ENCODE measurements at regions of chrX and their contacts with region 1.

Region 1: GRCh38 chrX:43836435-43837184 is 45.6 kb downstream of the MAOB start:
- DNase-seq: no peak
- ATAC-seq: no peak
- H3K4me3 ChIP-seq: no peak overlapping the region
- H3K27ac ChIP-seq: no peak overlapping the region
- H3K4me1 ChIP-seq: peaks cover 0 to 9% (median 0%) of the 10 kb centered on the region in 12 donors
- H3K27me3 ChIP-seq: peaks cover 0 to 47% (median 0%) of the 10 kb centered on the region in 9 donors
- CTCF ChIP-seq: peak; percentile 44 to 77 (median 65)
- POLR2A ChIP-seq: no peak

Region 2: GRCh38 chrX:43882299-43882694 is 45.7 kb after region 1 on chrX and contains the start of gene MAOB:
- intact Hi-C with region 1: loop called in 1 of 10 experiments (anchors 10 kb)
- DNase-seq: peak; percentile 53 to 66 (median 58)
- ATAC-seq: peak in 3 of 4 donors; percentile 90 to 95 (median 95)
- H3K4me3 ChIP-seq: peak within 1 kb of the TSS; percentile 32 to 67 (median 55)
- H3K27ac ChIP-seq: peak within 1 kb of the TSS in 11 of 12 donors; percentile 60 to 85 (median 79)
- H3K4me1 ChIP-seq: peaks cover 0 to 13% (median 0%) of the 10 kb centered on the region in 12 donors
- H3K27me3 ChIP-seq: peaks cover 0 to 59% (median 0%) of the 10 kb centered on the region in 9 donors
- CTCF ChIP-seq: no peak
- POLR2A ChIP-seq: peak in 1 of 2 donors; percentile 29
- total RNA-seq, gene MAOB: 64.4 to 163 (median 127) TPM

Region 3: DNA sequence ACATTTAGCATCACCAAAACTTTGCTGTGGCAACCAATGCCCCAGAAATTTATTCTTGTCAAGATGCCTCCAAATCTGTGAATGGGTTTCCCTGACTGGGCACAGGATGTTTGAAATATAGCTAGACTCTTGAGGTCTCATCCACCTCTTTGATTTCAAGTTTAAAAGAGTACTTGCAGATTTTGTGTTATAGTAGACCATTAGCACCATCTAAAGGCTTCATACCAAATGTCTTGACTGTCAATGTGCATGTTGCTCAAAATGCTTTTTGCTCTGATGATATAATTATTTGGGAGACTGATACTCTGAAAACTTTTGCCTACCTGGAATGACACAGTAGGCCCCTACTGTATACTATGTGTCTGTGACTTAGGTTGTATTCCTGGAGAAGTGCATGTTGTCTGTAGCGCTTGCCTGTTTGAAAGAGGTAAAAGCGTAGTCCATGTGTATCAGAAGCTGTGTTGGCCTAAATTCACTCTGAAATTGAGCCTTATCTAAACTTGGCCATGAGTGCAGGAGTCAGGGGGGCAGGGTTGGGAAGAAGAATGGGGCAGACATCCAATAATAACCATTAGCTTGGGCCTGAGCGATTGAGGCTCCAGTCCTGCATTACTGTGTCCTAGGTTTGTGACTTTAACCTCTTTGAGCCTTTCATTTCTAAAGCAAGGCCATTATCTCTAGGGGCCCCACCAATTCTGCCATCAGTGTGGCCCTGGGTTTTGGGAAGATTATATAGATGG is 102.7 kb after region 1 on chrX:
- intact Hi-C with region 1: loop called (anchors 1 to 5 kb)
- DNase-seq: no peak
- ATAC-seq: peak in 2 of 4 donors; percentile 50 to 59
- H3K4me3 ChIP-seq: no peak overlapping the region
- H3K27ac ChIP-seq: no peak overlapping the region
- H3K4me1 ChIP-seq: no peaks in the 10 kb centered on the region
- H3K27me3 ChIP-seq: peaks cover 0 to 25% (median 0%) of the 10 kb centered on the region in 9 donors
- CTCF ChIP-seq: peak in 10 of 12 donors; percentile 2 to 50 (median 32)
- POLR2A ChIP-seq: no peak

Region 4: GRCh38 chrX:44462850-44463249 is 626.2 kb after region 1 on chrX:
- intact Hi-C with region 1: no loop called
- DNase-seq: peak in 2 of 5 donors; percentile 7 to 33
- ATAC-seq: no peak
- H3K4me3 ChIP-seq: no peak overlapping the region
- H3K27ac ChIP-seq: peak overlapping the region in 1 of 12 donors; percentile 19
- H3K4me1 ChIP-seq: no peaks in the 10 kb centered on the region
- H3K27me3 ChIP-seq: peaks cover 0 to 10% (median 0%) of the 10 kb centered on the region in 9 donors
- CTCF ChIP-seq: no peak
- POLR2A ChIP-seq: no peak